ENCODE measurements at regions of chr5 and their contacts with region 1.

Region 1: GRCh38 chr5:168592014-168592418 is 12.8 kb upstream of the PANK3 start:
- DNase-seq: peak; percentile 98
- ATAC-seq: peak; percentile 94
- H3K4me3 ChIP-seq: peak overlapping the region; percentile 26 to 54 (median 30); a peak in 3 of 6 replicates
- H3K27ac ChIP-seq: peak overlapping the region; percentile 93
- H3K4me1 ChIP-seq: peaks cover 59% of the 10 kb centered on the region
- H3K27me3 ChIP-seq: no peaks in the 10 kb centered on the region
- CTCF ChIP-seq: no peak
- EP300 ChIP-seq: peak in 1 of 2 experiments; percentile 95; a peak in 2 of 4 replicates
- POLR2A ChIP-seq: no peak
- RAD21 ChIP-seq: no peak; the same call in 1 of the 2 replicates

Region 2: DNA sequence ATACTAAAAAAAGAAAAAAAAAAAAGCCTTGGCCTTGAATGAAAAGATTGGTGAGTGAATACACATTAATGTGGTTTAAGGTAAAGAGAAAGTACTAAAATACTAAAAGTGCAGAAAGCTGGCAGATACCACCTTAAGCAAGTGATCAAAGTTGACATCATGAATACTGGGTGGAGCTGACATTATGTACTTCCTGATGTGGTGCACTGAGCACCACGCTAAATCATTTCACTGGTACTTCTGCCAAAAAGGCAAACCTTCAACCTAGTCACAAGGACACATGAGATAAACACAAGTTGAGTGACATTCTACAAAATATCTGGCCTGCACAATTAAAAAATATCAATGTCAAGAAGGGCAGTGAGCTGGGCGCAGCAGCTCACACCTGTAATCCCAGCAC is 21.0 kb after region 1 on chr5:
- CTCF ChIA-PET with region 1: no interaction called
- POLR2A ChIA-PET with region 1: no interaction called
- in situ Hi-C with region 1: no loop called
- intact Hi-C with region 1: loop called (anchors 2 kb)
- DNase-seq: no peak
- ATAC-seq: peak; percentile 43; the same call in 1 of the 3 replicates
- H3K4me3 ChIP-seq: no peak overlapping the region
- H3K27ac ChIP-seq: peak overlapping the region; percentile 23
- H3K4me1 ChIP-seq: peaks cover 44% of the 10 kb centered on the region
- H3K27me3 ChIP-seq: no peaks in the 10 kb centered on the region
- CTCF ChIP-seq: no peak
- EP300 ChIP-seq: no peak
- POLR2A ChIP-seq: no peak
- RAD21 ChIP-seq: no peak

Region 3: GRCh38 chr5:168793841-168794837 is 202.1 kb after region 1 on chr5:
- CTCF ChIA-PET with region 1: no interaction called
- POLR2A ChIA-PET with region 1: no interaction called
- in situ Hi-C with region 1: no loop called
- intact Hi-C with region 1: no loop called
- DNase-seq: peak; percentile 33
- ATAC-seq: peak; percentile 50
- H3K4me3 ChIP-seq: no peak overlapping the region
- H3K27ac ChIP-seq: no peak overlapping the region
- H3K4me1 ChIP-seq: no peaks in the 10 kb centered on the region
- H3K27me3 ChIP-seq: peaks cover 2 to 64% of the 10 kb centered on the region in 2 experiments; a peak in 4 of 5 replicates
- CTCF ChIP-seq: no peak
- EP300 ChIP-seq: no peak
- POLR2A ChIP-seq: no peak
- RAD21 ChIP-seq: no peak